Panc1 (cell line): ENCODE measurements at regions of chr3 and their contacts with region 1.

Region 1: GRCh38 chr3:36124118-36124796 is 256.0 kb upstream of the STAC start:
- DNase-seq: peak; percentile 25
- ATAC-seq: peak; percentile 87
- H3K4me3 ChIP-seq: no peak overlapping the region
- H3K27ac ChIP-seq: no peak overlapping the region
- H3K4me1 ChIP-seq: no peaks in the 10 kb centered on the region
- H3K27me3 ChIP-seq: no peaks in the 10 kb centered on the region
- CTCF ChIP-seq: peak; percentile 60

Region 2: GRCh38 chr3:36540888-36541518 is 416.7 kb after region 1 on chr3:
- CTCF ChIA-PET with region 1: no interaction called
- POLR2A ChIA-PET with region 1: no interaction called
- in situ Hi-C with region 1: no loop called
- intact Hi-C with region 1: loop called (anchors 10 kb)
- DNase-seq: peak; percentile 15
- ATAC-seq: no peak
- H3K4me3 ChIP-seq: no peak overlapping the region
- H3K27ac ChIP-seq: no peak overlapping the region
- H3K4me1 ChIP-seq: no peaks in the 10 kb centered on the region
- H3K27me3 ChIP-seq: no peaks in the 10 kb centered on the region
- CTCF ChIP-seq: peak; percentile 71

Region 3: DNA sequence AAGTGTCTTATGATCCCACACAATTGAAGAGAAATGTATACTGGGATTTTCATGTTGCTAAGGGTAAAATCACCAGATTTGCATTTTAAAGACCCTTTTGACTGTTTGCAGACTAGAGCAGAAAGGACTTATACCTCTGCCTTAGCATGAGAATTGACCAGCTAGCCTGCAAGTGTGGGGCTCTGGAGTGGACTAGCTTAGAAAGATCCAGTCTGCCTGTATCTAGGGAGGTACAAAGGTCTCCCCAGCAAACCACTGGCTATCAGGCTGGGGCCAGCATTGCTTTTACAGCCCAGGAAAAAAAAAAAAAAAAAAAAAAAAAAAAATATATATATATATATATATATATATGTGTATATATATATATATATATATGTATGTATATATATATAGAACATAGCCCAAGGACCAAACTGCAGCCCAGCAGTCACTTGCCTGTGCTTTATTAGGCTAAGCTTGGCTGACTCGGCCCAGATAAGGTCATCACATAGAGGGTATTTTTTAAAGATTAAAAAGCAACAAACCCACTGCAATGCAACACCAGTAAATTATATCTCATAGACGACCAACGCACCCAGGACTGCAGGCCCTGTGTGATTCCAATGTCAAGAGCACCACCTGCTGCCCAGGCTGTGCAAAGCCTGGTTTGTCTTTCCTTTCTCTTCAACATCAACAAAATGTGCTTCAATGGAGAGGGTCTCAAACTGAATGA is 576.4 kb after region 1 on chr3:
- CTCF ChIA-PET with region 1: no interaction called
- POLR2A ChIA-PET with region 1: no interaction called
- in situ Hi-C with region 1: no loop called
- intact Hi-C with region 1: loop called (anchors 1 kb)
- DNase-seq: peak; percentile 55
- ATAC-seq: peak; percentile 94
- H3K4me3 ChIP-seq: no peak overlapping the region
- H3K27ac ChIP-seq: no peak overlapping the region
- H3K4me1 ChIP-seq: no peaks in the 10 kb centered on the region
- H3K27me3 ChIP-seq: no peaks in the 10 kb centered on the region
- CTCF ChIP-seq: peak; percentile 74